ENCODE measurements at regions of chr11 and their contacts with region 1.

Region 1: DNA sequence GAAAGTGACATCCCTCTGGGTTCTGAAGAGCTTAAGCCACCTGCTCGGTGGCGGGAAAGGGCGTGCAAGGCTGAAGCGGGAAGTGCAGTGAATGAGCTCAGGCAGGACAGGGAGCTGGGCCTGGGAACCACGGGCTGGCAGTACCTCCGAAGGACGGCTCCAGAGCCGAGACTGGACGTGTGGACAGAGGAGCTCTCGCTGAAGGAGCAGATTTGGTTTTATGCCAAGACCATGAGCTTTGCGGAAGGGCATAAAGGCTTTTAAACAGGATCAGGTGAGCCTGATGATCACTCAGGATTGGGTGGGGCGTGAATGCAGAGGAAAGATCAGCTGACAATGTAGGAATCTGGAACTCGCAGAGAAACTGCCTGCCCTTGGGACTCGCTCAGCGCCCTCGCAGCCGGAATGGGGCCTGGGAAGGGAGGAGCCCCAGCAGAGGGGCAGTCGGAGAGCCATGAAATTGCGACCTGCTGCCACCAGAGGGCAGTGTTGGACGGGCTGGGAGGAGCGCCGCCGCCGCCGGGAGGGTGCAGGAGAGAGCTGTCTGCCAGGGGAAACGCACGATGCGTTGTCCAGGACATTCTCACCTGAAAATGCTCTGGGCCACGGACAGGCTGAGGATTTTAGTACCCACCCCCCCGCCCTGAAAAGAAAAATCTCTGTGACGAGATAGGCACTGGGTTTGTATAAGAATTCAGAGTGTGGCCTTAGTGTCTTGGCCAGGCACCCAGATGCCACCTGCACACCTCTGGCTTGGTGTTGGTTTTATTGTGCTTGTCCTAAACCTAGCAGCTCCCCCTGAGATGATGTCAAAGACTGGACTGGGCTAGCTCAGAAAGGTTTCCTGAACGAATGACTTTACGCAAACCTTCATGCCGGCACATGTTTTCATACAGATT is 324.4 kb downstream of the NTM start:
- DNase-seq: peak; percentile 65
- H3K4me3 ChIP-seq: no peak overlapping the region
- H3K27ac ChIP-seq: no peak overlapping the region
- H3K4me1 ChIP-seq: no peaks in the 10 kb centered on the region
- H3K27me3 ChIP-seq: no peaks in the 10 kb centered on the region
- CTCF ChIP-seq: peak; percentile 63 to 78

Region 2: GRCh38 chr11:131684111-131685060 is 10.4 kb before region 1 on chr11:
- CTCF ChIA-PET with region 1: no interaction called
- dilution Hi-C with region 1: no loop called
- in situ Hi-C with region 1: no loop called
- intact Hi-C with region 1: no loop called
- DNase-seq: no peak
- H3K4me3 ChIP-seq: no peak overlapping the region
- H3K27ac ChIP-seq: no peak overlapping the region
- H3K4me1 ChIP-seq: peaks cover 6% of the 10 kb centered on the region
- H3K27me3 ChIP-seq: no peaks in the 10 kb centered on the region
- CTCF ChIP-seq: no peak

Region 3: DNA sequence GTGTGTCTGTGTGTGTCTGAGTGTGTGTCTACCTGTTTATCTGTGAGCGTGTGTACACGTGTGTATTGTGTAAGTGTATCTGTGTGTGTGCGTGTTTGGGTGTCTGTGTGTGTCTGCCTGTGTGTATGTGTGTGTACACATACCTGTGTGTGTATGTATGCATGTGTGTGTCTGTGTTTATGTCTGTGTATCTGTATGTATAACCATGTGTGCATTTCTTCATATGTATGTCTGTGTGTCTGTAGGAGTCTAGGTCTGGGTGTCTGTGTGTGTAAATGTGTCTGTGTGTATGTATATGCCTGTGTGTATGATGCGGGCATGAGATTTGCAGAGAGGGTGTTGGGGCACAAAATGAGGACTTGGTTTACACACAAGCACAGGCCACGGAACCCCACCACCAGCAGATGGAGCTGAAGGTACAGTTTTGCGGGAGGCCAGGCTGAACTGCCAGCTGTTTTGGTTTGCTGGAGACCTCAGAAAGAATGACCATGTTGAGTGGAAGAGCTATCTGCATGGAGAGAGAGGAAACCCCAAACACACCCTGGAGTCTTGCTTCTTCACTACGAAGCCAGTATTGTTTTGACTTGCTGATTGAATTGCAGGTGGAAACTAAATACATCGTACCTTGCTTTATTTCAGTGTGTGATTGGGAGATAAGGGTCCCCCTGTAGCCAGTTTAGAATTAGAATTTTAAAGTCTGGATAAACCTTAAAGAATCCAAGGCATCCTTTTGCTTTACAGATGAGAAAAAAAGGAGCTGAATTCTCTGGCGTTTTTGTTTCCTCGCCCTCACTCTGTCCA is 172.9 kb after region 1 on chr11:
- CTCF ChIA-PET with region 1: no interaction called
- dilution Hi-C with region 1: no loop called
- in situ Hi-C with region 1: no loop called
- intact Hi-C with region 1: loop called (anchors 5 kb)
- DNase-seq: peak; percentile 70
- H3K4me3 ChIP-seq: no peak overlapping the region
- H3K27ac ChIP-seq: no peak overlapping the region
- H3K4me1 ChIP-seq: peaks cover 6% of the 10 kb centered on the region
- H3K27me3 ChIP-seq: no peaks in the 10 kb centered on the region
- CTCF ChIP-seq: peak; percentile 95 to 98

Region 4: DNA sequence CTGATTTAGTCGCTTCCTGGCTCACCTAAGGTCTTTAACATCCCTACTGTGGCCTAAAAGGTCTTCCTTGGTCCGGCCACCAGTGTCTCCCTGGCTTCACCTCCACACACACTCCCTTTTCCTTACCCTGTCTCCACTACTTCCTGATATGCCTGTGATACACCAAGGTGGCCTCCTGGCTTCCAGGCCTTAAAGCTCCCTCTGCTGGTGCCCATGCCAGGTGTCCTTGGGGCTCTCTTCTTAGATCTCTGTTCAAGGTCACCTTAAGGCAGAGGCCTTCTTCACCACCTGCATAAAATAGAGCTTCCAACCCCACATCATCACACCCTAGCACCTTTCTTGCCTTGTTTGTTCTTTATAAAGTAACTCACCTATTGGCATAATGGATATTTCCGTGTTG is 463.3 kb after region 1 on chr11:
- CTCF ChIA-PET with region 1: no interaction called
- dilution Hi-C with region 1: no loop called
- in situ Hi-C with region 1: no loop called
- intact Hi-C with region 1: loop called (anchors 10 kb)
- DNase-seq: peak; percentile 30
- H3K4me3 ChIP-seq: no peak overlapping the region
- H3K27ac ChIP-seq: no peak overlapping the region
- H3K4me1 ChIP-seq: peaks cover 16% of the 10 kb centered on the region
- H3K27me3 ChIP-seq: no peaks in the 10 kb centered on the region
- CTCF ChIP-seq: peak; percentile 49 to 73

Region 5: GRCh38 chr11:132402071-132402684 is 707.4 kb after region 1 on chr11:
- CTCF ChIA-PET with region 1: interaction called, 3 read pairs
- dilution Hi-C with region 1: no loop called
- in situ Hi-C with region 1: no loop called
- intact Hi-C with region 1: loop called (anchors 1 kb)
- DNase-seq: peak; percentile 39
- H3K4me3 ChIP-seq: no peak overlapping the region
- H3K27ac ChIP-seq: no peak overlapping the region
- H3K4me1 ChIP-seq: no peaks in the 10 kb centered on the region
- H3K27me3 ChIP-seq: no peaks in the 10 kb centered on the region
- CTCF ChIP-seq: peak; percentile 62 to 71

Region 6: DNA sequence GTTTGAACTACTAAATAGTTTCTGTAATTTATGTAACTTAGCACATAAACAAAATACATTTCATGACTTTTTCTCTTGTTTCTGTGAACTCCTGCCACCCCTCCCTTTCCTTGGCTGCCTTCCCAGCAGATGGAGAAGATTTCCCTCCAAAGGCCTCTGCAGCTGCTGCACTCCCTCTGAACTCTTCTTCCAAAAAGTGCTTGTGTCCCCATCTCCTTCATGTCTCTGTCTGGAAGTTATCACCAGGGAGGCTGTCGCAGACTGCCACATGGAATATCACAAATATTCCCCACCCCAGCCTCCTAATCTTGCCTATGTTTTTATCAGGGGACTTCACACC is 769.2 kb after region 1 on chr11:
- CTCF ChIA-PET with region 1: no interaction called
- dilution Hi-C with region 1: no loop called
- in situ Hi-C with region 1: no loop called
- intact Hi-C with region 1: loop called (anchors 10 kb)
- DNase-seq: no peak
- H3K4me3 ChIP-seq: no peak overlapping the region
- H3K27ac ChIP-seq: no peak overlapping the region
- H3K4me1 ChIP-seq: no peaks in the 10 kb centered on the region
- H3K27me3 ChIP-seq: no peaks in the 10 kb centered on the region
- CTCF ChIP-seq: no peak

Region 7: DNA sequence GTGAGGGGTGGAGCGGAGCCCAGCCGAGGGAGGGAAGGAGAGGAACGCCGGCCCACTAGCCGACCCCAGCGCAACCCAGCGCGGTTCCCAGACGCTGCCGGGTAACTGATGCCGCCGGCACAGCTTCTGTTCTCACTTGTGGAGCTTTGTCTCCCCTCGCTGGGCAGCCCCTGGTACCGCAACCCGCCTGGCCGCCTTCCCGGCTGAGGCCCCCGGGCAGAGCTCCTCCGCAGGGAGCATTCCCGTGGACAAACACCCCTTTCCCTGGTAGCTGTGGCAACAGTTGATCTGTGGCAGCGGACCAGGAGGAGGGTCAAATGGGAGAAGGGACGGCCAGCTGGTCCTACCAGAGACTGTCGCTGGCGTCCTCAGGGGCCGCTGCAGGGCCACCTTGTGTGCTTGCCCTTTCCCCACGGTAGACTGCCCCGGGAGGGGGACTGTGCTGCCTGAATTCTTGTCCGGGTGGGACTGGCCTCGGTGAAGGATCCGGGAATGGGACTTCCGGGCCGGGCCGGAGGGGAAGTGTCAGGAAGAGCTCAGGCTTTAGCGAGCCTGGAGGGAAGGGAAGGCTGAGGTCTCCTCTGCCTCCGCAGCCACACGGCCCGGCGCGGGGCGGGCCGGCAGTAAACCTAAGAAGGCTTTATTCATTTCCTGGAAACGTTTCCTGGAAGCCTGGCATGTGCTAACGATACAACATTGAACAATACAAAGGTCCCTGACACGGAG is 1369.5 kb after region 1 on chr11:
- CTCF ChIA-PET with region 1: no interaction called
- dilution Hi-C with region 1: no loop called
- in situ Hi-C with region 1: no loop called
- intact Hi-C with region 1: loop called (anchors 1 kb)
- DNase-seq: peak; percentile 30
- H3K4me3 ChIP-seq: peak overlapping the region; percentile 52 to 58 (median 57)
- H3K27ac ChIP-seq: no peak overlapping the region
- H3K4me1 ChIP-seq: peaks cover 11% of the 10 kb centered on the region
- H3K27me3 ChIP-seq: no peaks in the 10 kb centered on the region
- CTCF ChIP-seq: peak; percentile 58 to 82

Measured in mammary epithelial cell (primary cell).